ENCODE measurements at regions of chr10 and their contacts with region 1.

Region 1: GRCh38 chr10:43138021-43138756 is at the start of gene CSGALNACT2:
- DNase-seq: peak; percentile 89 to 92 (median 90)
- H3K4me3 ChIP-seq: peak within 1 kb of the TSS; percentile 89 to 99 (median 98)
- H3K4me3 Mint-ChIP-seq: peak within 1 kb of the TSS; percentile 97 to 99
- H3K27ac ChIP-seq: peak within 1 kb of the TSS; percentile 97 to 98
- H3K27ac Mint-ChIP-seq: peak within 1 kb of the TSS; percentile 98 to 100 (median 99)
- H3K4me1 ChIP-seq: peaks cover 51 to 82% of the 10 kb centered on the region in 2 donors
- H3K4me1 Mint-ChIP-seq: peaks cover 63% of the 10 kb centered on the region
- H3K27me3 ChIP-seq: no peaks in the 10 kb centered on the region
- H3K27me3 Mint-ChIP-seq: peaks cover 0 to 4% (median 0%) of the 10 kb centered on the region in 3 donors
- CTCF ChIP-seq: no peak
- polyA plus RNA-seq, gene CSGALNACT2: 43.7 to 80.1 (median 48.2) TPM

Region 2: GRCh38 chr10:43078987-43079275 is 59.3 kb before region 1 on chr10:
- intact Hi-C with region 1: no loop called
- DNase-seq: peak; percentile 7 to 17 (median 10)
- H3K4me3 ChIP-seq: no peak overlapping the region
- H3K4me3 Mint-ChIP-seq: peak overlapping the region in 1 of 2 donors; percentile 63
- H3K27ac ChIP-seq: no peak overlapping the region
- H3K27ac Mint-ChIP-seq: no peak overlapping the region
- H3K4me1 ChIP-seq: peaks cover 35 to 69% of the 10 kb centered on the region in 2 donors
- H3K4me1 Mint-ChIP-seq: peaks cover 47% of the 10 kb centered on the region
- H3K27me3 ChIP-seq: peaks cover 8 to 45% of the 10 kb centered on the region in 2 donors
- H3K27me3 Mint-ChIP-seq: peaks cover 30 to 64% (median 59%) of the 10 kb centered on the region in 3 donors
- CTCF ChIP-seq: peak; percentile 34

Region 3: DNA sequence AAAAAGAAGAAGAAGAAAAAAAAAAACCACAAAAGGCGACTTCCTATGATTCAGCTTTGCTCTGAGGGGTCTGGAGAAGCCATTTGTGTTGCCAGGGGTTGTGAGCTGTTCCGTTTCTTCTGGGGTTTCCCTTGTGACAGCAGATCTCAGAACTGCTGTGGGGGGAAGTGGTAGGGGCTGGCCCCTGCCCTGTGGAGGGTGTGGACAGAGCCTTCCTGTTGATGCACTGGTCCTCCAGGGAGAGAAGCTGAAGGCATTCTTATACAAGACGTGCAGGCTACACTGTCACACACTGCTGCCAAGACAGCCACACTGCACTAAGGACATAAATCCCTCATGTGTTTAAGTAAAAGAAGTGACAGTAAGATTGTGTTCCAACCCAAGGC is 17.3 kb before region 1 on chr10:
- intact Hi-C with region 1: loop called in 1 of 2 experiments (anchors 2 kb)
- DNase-seq: peak; percentile 95 to 98 (median 97)
- H3K4me3 ChIP-seq: peak overlapping the region in 1 of 3 experiments; percentile 39
- H3K4me3 Mint-ChIP-seq: peak overlapping the region; percentile 57 to 68
- H3K27ac ChIP-seq: peak overlapping the region; percentile 74 to 94
- H3K27ac Mint-ChIP-seq: peak overlapping the region; percentile 94 to 98 (median 98)
- H3K4me1 ChIP-seq: peaks cover 55 to 64% of the 10 kb centered on the region in 2 donors
- H3K4me1 Mint-ChIP-seq: peaks cover 61% of the 10 kb centered on the region
- H3K27me3 ChIP-seq: no peaks in the 10 kb centered on the region
- H3K27me3 Mint-ChIP-seq: peaks cover 1 to 6% (median 2%) of the 10 kb centered on the region in 3 donors
- CTCF ChIP-seq: no peak

Region 4: GRCh38 chr10:43170491-43170890 is 32.3 kb after region 1 on chr10:
- intact Hi-C with region 1: loop called in 1 of 2 experiments (anchors 5 kb)
- DNase-seq: no peak
- H3K4me3 ChIP-seq: no peak overlapping the region
- H3K4me3 Mint-ChIP-seq: no peak overlapping the region
- H3K27ac ChIP-seq: peak overlapping the region in 1 of 2 donors; percentile 69
- H3K27ac Mint-ChIP-seq: peak overlapping the region; percentile 73 to 91 (median 78)
- H3K4me1 ChIP-seq: peaks cover 26 to 39% of the 10 kb centered on the region in 2 donors
- H3K4me1 Mint-ChIP-seq: peaks cover 34% of the 10 kb centered on the region
- H3K27me3 ChIP-seq: no peaks in the 10 kb centered on the region
- H3K27me3 Mint-ChIP-seq: no peaks in the 10 kb centered on the region
- CTCF ChIP-seq: peak; percentile 18